CD4-positive, alpha-beta T cell (primary cell): ENCODE measurements at regions of chr20 and their contacts with region 1.

Region 1: DNA sequence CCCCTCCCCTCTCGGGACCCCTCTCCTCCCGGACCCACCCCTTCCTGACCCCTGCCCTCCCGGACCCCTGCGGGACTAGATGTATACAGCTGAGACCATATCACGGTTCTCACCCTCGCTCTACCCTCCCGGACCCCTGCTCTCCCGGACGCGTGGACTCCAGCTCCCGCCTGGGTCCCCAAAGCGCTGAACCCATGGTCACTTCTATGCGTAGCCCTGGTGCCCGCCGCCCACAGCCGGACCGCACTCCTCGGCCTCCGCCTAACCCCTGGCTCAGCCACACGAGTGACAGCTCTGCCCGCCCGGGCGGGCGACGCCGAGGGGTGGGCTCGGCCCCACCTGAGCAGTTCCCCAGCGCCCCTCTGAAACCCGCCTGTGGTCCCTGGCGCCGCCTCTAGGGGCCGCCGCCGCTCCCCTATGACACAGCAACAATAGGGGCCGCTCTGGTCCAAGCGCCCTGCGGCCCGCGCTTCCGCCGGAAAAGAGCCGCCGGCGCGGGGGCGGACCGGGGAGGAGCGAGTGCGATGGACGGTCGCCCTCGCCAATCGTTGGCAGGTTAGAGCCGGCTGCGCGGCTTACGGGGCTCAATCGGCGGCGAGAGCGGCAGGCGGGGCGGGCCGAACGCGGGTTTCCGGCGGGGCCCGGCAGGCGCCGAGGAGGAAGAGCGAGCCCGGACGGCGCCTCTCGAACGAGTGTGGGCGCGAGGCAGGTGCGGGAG is at the start of gene ADRM1:
- DNase-seq: peak; percentile 88 to 98 (median 95)
- ATAC-seq: peak; percentile 84
- H3K4me3 ChIP-seq: peak within 1 kb of the TSS; percentile 89
- H3K4me3 Mint-ChIP-seq: peak within 1 kb of the TSS; percentile 100
- H3K27ac ChIP-seq: peak within 1 kb of the TSS; percentile 89 to 92
- H3K27ac Mint-ChIP-seq: peak within 1 kb of the TSS; percentile 96
- H3K4me1 ChIP-seq: peaks cover 46% of the 10 kb centered on the region
- H3K4me1 Mint-ChIP-seq: peaks cover 26% of the 10 kb centered on the region
- H3K27me3 ChIP-seq: no peaks in the 10 kb centered on the region
- H3K27me3 Mint-ChIP-seq: no peaks in the 10 kb centered on the region
- CTCF ChIP-seq: peak; percentile 74
- total RNA-seq, gene ADRM1: 40.8 to 44.3 TPM

Region 2: DNA sequence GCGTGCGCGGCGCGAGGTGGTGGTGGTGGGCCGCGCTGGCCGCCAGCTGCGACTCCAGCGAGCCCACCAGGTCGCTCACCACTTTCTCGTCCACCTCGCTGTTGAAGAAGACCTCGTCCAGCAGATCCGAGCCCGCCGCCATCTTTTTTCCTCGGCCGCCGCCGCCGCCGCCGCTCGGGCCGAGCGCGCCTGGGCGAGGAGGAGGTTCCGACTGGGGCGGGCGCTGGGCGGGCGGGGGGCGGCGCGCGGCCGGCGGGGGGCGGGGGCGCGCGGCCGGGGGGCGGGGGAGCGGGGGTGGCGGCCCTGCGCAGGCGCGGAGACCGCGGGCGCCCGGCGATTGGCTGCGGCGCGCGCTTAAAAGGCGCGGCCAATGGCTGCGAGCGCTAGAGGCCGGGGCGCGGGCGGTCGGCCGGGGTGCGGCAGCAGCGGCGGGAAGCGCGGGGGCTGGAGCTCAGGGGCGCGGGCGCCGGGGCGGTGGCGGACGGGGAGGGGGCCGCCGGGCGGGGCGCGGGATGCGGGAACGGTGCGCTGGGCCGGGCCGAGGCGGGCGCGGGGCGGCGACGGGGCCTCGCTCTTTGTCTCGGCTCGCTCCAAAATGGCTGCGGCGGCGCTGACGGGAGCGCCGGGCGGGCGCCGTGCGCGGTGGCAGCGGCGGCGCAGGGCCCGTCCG is 236.7 kb before region 1 on chr20 and contains the start of gene TAF4:
- CTCF ChIA-PET with region 1: no interaction called
- POLR2A ChIA-PET with region 1: no interaction called
- intact Hi-C with region 1: loop called in 1 of 2 experiments (anchors 2 kb)
- DNase-seq: peak; percentile 58 to 95 (median 80)
- ATAC-seq: peak; percentile 74
- H3K4me3 ChIP-seq: peak within 1 kb of the TSS; percentile 77
- H3K4me3 Mint-ChIP-seq: peak within 1 kb of the TSS; percentile 96
- H3K27ac ChIP-seq: peak within 1 kb of the TSS; percentile 15 to 70
- H3K27ac Mint-ChIP-seq: peak within 1 kb of the TSS; percentile 98
- H3K4me1 ChIP-seq: peaks cover 46% of the 10 kb centered on the region
- H3K4me1 Mint-ChIP-seq: peaks cover 51% of the 10 kb centered on the region
- H3K27me3 ChIP-seq: no peaks in the 10 kb centered on the region
- H3K27me3 Mint-ChIP-seq: no peaks in the 10 kb centered on the region
- CTCF ChIP-seq: no peak
- total RNA-seq, gene TAF4: 11.1 to 12.5 TPM

Region 3: GRCh38 chr20:62182613-62183425 is 119.7 kb before region 1 on chr20 and contains the start of gene MTG2:
- CTCF ChIA-PET with region 1: no interaction called
- POLR2A ChIA-PET with region 1: no interaction called
- intact Hi-C with region 1: loop called in 1 of 2 experiments (anchors 2 kb)
- DNase-seq: peak; percentile 85 to 98 (median 92)
- ATAC-seq: peak; percentile 94
- H3K4me3 ChIP-seq: peak within 1 kb of the TSS; percentile 78
- H3K4me3 Mint-ChIP-seq: peak within 1 kb of the TSS; percentile 98
- H3K27ac ChIP-seq: peak within 1 kb of the TSS; percentile 78 to 83
- H3K27ac Mint-ChIP-seq: peak within 1 kb of the TSS; percentile 97
- H3K4me1 ChIP-seq: peaks cover 22% of the 10 kb centered on the region
- H3K4me1 Mint-ChIP-seq: peaks cover 49% of the 10 kb centered on the region
- H3K27me3 ChIP-seq: no peaks in the 10 kb centered on the region
- H3K27me3 Mint-ChIP-seq: no peaks in the 10 kb centered on the region
- CTCF ChIP-seq: no peak
- total RNA-seq, gene MTG2: 9.5 to 9.9 TPM

Region 4: DNA sequence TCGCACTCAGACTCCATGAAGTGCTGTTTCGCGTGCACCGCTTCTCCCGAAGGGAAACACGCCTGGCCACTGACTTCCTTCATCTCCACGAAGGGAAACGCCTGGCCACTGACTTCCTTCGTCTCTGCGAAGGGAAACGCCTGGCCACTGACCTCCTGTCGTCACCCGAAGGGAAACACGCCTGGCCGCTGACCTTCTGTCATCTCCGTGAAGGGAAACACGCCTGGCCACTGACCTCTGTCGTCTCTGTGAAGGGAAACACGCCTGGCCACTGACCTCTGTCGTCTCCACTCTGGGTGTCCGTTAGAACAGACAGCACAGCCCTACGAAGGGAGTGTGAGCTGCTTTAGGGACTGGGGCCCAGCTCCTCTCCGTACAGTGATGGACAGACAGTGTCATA is 16.8 kb before region 1 on chr20:
- CTCF ChIA-PET with region 1: no interaction called
- POLR2A ChIA-PET with region 1: no interaction called
- intact Hi-C with region 1: no loop called
- DNase-seq: no peak
- ATAC-seq: no peak
- H3K4me3 ChIP-seq: no peak overlapping the region
- H3K4me3 Mint-ChIP-seq: no peak overlapping the region
- H3K27ac ChIP-seq: no peak overlapping the region
- H3K27ac Mint-ChIP-seq: no peak overlapping the region
- H3K4me1 ChIP-seq: no peaks in the 10 kb centered on the region
- H3K4me1 Mint-ChIP-seq: no peaks in the 10 kb centered on the region
- H3K27me3 ChIP-seq: no peaks in the 10 kb centered on the region
- H3K27me3 Mint-ChIP-seq: no peaks in the 10 kb centered on the region
- CTCF ChIP-seq: no peak

Region 5: GRCh38 chr20:62368976-62369814 is 66.7 kb after region 1 on chr20:
- CTCF ChIA-PET with region 1: no interaction called
- POLR2A ChIA-PET with region 1: no interaction called
- intact Hi-C with region 1: loop called in 1 of 2 experiments (anchors 5 kb)
- DNase-seq: no peak
- ATAC-seq: no peak
- H3K4me3 ChIP-seq: no peak overlapping the region
- H3K4me3 Mint-ChIP-seq: no peak overlapping the region
- H3K27ac ChIP-seq: no peak overlapping the region
- H3K27ac Mint-ChIP-seq: no peak overlapping the region
- H3K4me1 ChIP-seq: peaks cover 26% of the 10 kb centered on the region
- H3K4me1 Mint-ChIP-seq: peaks cover 4% of the 10 kb centered on the region
- H3K27me3 ChIP-seq: peaks cover 42 to 43% of the 10 kb centered on the region in 2 experiments
- H3K27me3 Mint-ChIP-seq: peaks cover 27% of the 10 kb centered on the region
- CTCF ChIP-seq: no peak

Region 6: GRCh38 chr20:62407221-62407992 is 104.9 kb after region 1 on chr20 and contains the start of gene CABLES2:
- CTCF ChIA-PET with region 1: no interaction called
- POLR2A ChIA-PET with region 1: interaction called, 3 read pairs
- intact Hi-C with region 1: loop called in 1 of 2 experiments (anchors 1 kb)
- DNase-seq: peak; percentile 83 to 96 (median 88)
- ATAC-seq: peak; percentile 95
- H3K4me3 ChIP-seq: peak within 1 kb of the TSS; percentile 72
- H3K4me3 Mint-ChIP-seq: peak within 1 kb of the TSS; percentile 84
- H3K27ac ChIP-seq: peak within 1 kb of the TSS in 1 of 2 donors; percentile 24
- H3K27ac Mint-ChIP-seq: no peak within 1 kb of the TSS
- H3K4me1 ChIP-seq: peaks cover 46% of the 10 kb centered on the region
- H3K4me1 Mint-ChIP-seq: peaks cover 18% of the 10 kb centered on the region
- H3K27me3 ChIP-seq: no peaks in the 10 kb centered on the region
- H3K27me3 Mint-ChIP-seq: no peaks in the 10 kb centered on the region
- CTCF ChIP-seq: no peak
- total RNA-seq, gene CABLES2: 4.4 TPM

Region 7: DNA sequence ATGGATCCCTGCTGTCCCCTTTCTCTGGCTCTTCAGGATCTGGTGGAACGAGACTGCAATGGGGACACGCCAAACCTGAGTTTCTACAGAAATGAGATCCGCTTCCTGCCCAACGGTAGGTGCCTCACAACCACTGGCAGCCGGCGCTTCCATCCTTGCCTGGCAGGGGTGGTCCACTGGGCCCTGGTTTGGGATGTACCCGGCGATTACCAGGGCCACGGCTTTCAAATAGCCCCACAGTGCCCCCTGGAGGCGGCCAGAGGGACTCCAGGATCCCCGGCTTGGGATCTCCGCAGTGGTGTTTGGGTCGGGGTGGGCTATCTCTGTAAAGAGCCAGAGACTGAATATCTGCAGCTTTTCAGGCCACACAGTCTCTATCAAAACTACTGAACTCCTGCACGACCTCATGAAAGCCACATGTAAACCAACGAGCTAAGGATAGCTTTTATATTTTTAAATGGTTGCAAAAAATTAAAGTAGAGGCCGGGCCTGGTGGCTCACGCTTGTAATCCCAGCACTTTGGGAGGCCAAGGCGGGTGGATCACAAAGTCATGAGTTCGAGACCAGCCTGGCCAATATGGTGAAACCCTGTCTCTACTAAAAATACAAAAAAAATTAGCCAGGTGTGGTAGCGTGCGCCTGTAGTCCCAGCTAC is 505.8 kb after region 1 on chr20:
- CTCF ChIA-PET with region 1: no interaction called
- POLR2A ChIA-PET with region 1: no interaction called
- intact Hi-C with region 1: loop called in 1 of 2 experiments (anchors 5 kb)
- DNase-seq: peak; percentile 64 to 85 (median 72)
- ATAC-seq: peak; percentile 58
- H3K4me3 ChIP-seq: no peak overlapping the region
- H3K4me3 Mint-ChIP-seq: peak overlapping the region; percentile 89
- H3K27ac ChIP-seq: no peak overlapping the region
- H3K27ac Mint-ChIP-seq: peak overlapping the region; percentile 84
- H3K4me1 ChIP-seq: peaks cover 41% of the 10 kb centered on the region
- H3K4me1 Mint-ChIP-seq: peaks cover 28% of the 10 kb centered on the region
- H3K27me3 ChIP-seq: no peaks in the 10 kb centered on the region
- H3K27me3 Mint-ChIP-seq: peaks cover 4% of the 10 kb centered on the region
- CTCF ChIP-seq: peak; percentile 91